ENCODE measurements at regions of chr6 and their contacts with region 1.

Region 1: GRCh38 chr6:18264219-18264922 is at the start of gene DEK:
- DNase-seq: peak; percentile 91
- ATAC-seq: peak; percentile 55
- H3K4me3 Mint-ChIP-seq: peak within 1 kb of the TSS; percentile 93
- H3K27ac Mint-ChIP-seq: peak within 1 kb of the TSS; percentile 99
- H3K4me1 Mint-ChIP-seq: peaks cover 48% of the 10 kb centered on the region
- H3K27me3 Mint-ChIP-seq: no peaks in the 10 kb centered on the region
- total RNA-seq, gene DEK: 201 to 273 TPM

Region 2: DNA sequence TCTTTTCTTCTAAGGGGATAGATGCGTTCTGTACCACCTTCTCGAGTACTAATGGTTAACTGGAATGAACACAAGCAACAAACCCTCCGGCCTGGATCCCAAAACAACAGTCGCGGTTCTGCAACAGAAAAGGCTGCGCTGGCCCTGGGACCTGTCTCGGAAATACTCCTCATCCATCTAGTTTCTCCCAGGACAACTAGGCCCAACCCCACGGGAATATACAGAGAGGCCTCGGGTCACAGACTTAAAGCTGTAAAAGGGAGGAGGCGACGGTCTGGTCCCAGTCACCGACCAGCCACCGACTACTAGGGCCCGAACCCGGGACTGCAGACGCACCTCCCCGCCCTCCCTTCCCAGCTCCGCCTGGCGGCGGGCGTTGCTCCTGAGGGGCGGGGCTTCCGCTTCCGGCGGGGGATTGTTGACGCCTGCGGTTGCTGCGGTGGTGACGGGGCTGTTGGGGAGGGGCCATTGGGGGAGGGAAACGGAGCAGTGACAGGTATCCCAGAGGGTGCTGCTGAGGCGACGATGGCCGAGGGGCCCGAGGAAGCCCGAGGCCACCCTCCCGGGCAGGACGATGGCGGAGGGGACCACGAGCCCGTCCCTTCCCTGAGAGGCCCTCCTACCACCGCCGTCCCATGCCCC is 664.4 kb before region 1 on chr6 and contains the start of gene FAM8A1:
- CTCF ChIA-PET with region 1: interaction called, 3 read pairs
- POLR2A ChIA-PET with region 1: no interaction called
- intact Hi-C with region 1: loop called in 1 of 2 experiments (anchors 1 kb)
- DNase-seq: peak; percentile 98
- ATAC-seq: peak; percentile 83
- H3K4me3 Mint-ChIP-seq: peak within 1 kb of the TSS; percentile 75
- H3K27ac Mint-ChIP-seq: peak within 1 kb of the TSS; percentile 66
- H3K4me1 Mint-ChIP-seq: peaks cover 41% of the 10 kb centered on the region
- H3K27me3 Mint-ChIP-seq: no peaks in the 10 kb centered on the region
- total RNA-seq, gene FAM8A1: 3.3 to 4.1 TPM

Region 3: DNA sequence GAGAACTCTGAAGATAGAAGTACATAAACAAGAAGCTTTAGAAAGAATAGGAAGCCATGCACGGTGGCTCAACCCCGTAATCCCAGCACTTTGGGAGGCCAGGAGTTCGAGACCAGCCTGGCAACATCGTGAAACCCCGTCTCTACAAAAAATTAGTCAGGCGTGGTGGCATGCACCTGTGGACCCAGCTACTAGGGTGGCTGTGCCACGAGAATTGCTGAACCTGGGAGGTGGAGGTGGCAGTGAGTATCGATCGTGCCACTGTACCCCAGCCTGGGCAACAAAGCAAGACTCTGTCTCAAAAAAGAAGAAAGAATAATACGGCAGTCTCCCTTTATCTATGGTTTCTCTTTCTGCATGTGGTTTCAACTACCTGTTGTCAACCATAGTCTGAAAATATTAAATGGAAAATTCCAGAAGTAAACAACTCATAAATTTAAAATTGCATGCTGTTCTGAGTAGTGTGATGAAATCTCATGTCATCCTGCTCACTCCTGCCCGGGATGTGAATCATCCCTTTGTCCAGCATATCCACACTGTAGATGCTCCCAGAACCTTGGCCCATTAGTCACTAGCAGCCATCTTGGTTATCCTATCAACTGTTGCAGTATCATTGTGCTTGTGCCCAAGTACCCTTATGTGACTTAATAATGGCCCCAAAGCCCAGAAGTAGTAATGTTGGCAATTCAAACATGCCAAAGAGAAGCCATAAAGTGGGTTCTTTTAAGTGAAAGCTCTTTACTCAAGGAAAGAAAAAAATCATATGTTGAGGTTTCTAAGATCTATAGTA is 22.1 kb before region 1 on chr6:
- CTCF ChIA-PET with region 1: interaction called, 3 read pairs
- POLR2A ChIA-PET with region 1: interaction called, 3 read pairs
- intact Hi-C with region 1: loop called (anchors 2 kb)
- DNase-seq: no peak
- ATAC-seq: peak; percentile 24
- H3K4me3 Mint-ChIP-seq: no peak overlapping the region
- H3K27ac Mint-ChIP-seq: peak overlapping the region; percentile 78
- H3K4me1 Mint-ChIP-seq: peaks cover 60% of the 10 kb centered on the region
- H3K27me3 Mint-ChIP-seq: no peaks in the 10 kb centered on the region

Region 4: GRCh38 chr6:18488526-18489270 is 224.3 kb after region 1 on chr6:
- CTCF ChIA-PET with region 1: no interaction called
- POLR2A ChIA-PET with region 1: no interaction called
- intact Hi-C with region 1: loop called in 1 of 2 experiments (anchors 5 kb)
- DNase-seq: no peak
- ATAC-seq: no peak
- H3K4me3 Mint-ChIP-seq: no peak overlapping the region
- H3K27ac Mint-ChIP-seq: no peak overlapping the region
- H3K4me1 Mint-ChIP-seq: peaks cover 16% of the 10 kb centered on the region
- H3K27me3 Mint-ChIP-seq: peaks cover 27% of the 10 kb centered on the region